Esophagus squamous epithelium (tissue), 5 donors: ENCODE measurements at regions of chr12 and their contacts with region 1.

Region 1: GRCh38 chr12:113030875-113031525 is 25.5 kb upstream of the DTX1 start:
- DNase-seq: no peak
- H3K4me3 ChIP-seq: no peak overlapping the region
- H3K27ac ChIP-seq: no peak overlapping the region
- H3K4me1 ChIP-seq: no peaks in the 10 kb centered on the region
- H3K27me3 ChIP-seq: peaks cover 0 to 15% (median 0%) of the 10 kb centered on the region in 4 donors
- CTCF ChIP-seq: peak; percentile 46 to 82 (median 67)
- POLR2A ChIP-seq: no peak

Region 2: GRCh38 chr12:112694065-112694464 is 336.9 kb before region 1 on chr12:
- intact Hi-C with region 1: no loop called
- DNase-seq: no peak
- H3K4me3 ChIP-seq: no peak overlapping the region
- H3K27ac ChIP-seq: no peak overlapping the region
- H3K4me1 ChIP-seq: no peaks in the 10 kb centered on the region
- H3K27me3 ChIP-seq: peaks cover 0 to 17% (median 0%) of the 10 kb centered on the region in 4 donors
- CTCF ChIP-seq: no peak
- POLR2A ChIP-seq: no peak

Region 3: DNA sequence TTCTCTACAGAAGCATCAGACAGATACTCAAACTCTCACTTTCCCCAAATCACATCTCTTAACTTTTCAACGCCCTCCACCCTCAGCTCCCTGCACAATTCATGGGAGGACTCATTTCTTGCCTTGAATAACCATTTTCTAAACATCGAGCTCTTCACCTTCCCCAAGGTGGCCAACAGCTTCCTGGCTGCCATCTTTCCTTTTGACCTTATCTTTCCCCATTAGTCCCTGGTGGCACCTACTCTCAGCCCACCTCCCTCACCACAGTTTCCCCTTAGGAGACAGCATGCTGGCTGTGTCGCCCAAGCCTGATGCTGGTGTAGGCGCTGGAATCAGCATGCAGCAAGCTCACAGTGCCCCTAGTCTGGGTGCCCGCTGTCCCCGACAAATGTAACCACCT is 132.6 kb before region 1 on chr12:
- intact Hi-C with region 1: loop called (anchors 5 kb)
- DNase-seq: no peak
- H3K4me3 ChIP-seq: no peak overlapping the region
- H3K27ac ChIP-seq: no peak overlapping the region
- H3K4me1 ChIP-seq: no peaks in the 10 kb centered on the region
- H3K27me3 ChIP-seq: peaks cover 0 to 33% (median 0%) of the 10 kb centered on the region in 4 donors
- CTCF ChIP-seq: no peak
- POLR2A ChIP-seq: no peak

Region 4: GRCh38 chr12:113149361-113150150 is 118.6 kb after region 1 on chr12 and contains the start of gene CFAP73:
- intact Hi-C with region 1: no loop called
- DNase-seq: no peak
- H3K4me3 ChIP-seq: peak within 1 kb of the TSS in 1 of 4 donors; percentile 26
- H3K27ac ChIP-seq: peak within 1 kb of the TSS in 2 of 4 donors; percentile 28 to 33
- H3K4me1 ChIP-seq: peaks cover 0 to 39% (median 20%) of the 10 kb centered on the region in 3 donors
- H3K27me3 ChIP-seq: peaks cover 0 to 46% (median 0%) of the 10 kb centered on the region in 4 donors
- CTCF ChIP-seq: peak in 1 of 6 experiments; percentile 25
- POLR2A ChIP-seq: peak in 1 of 4 donors; percentile 14
- total RNA-seq, gene CFAP73: 0.26 TPM in 1 of 4 donors, not detected in the others